B cell (primary cell): ENCODE measurements at regions of chr11 and their contacts with region 1.

Region 1: GRCh38 chr11:46489661-46490560 is 98.3 kb upstream of the CHRM4 start:
- DNase-seq: peak; percentile 43
- ATAC-seq: peak; percentile 63
- H3K4me3 ChIP-seq: no peak overlapping the region
- H3K4me3 Mint-ChIP-seq: no peak overlapping the region
- H3K27ac ChIP-seq: no peak overlapping the region
- H3K27ac Mint-ChIP-seq: peak overlapping the region; percentile 5
- H3K4me1 ChIP-seq: peaks cover 0 to 3% of the 10 kb centered on the region in 2 donors
- H3K4me1 Mint-ChIP-seq: peaks cover 19% of the 10 kb centered on the region
- H3K27me3 ChIP-seq: no peaks in the 10 kb centered on the region
- H3K27me3 Mint-ChIP-seq: no peaks in the 10 kb centered on the region
- CTCF ChIP-seq: peak; percentile 54

Region 2: DNA sequence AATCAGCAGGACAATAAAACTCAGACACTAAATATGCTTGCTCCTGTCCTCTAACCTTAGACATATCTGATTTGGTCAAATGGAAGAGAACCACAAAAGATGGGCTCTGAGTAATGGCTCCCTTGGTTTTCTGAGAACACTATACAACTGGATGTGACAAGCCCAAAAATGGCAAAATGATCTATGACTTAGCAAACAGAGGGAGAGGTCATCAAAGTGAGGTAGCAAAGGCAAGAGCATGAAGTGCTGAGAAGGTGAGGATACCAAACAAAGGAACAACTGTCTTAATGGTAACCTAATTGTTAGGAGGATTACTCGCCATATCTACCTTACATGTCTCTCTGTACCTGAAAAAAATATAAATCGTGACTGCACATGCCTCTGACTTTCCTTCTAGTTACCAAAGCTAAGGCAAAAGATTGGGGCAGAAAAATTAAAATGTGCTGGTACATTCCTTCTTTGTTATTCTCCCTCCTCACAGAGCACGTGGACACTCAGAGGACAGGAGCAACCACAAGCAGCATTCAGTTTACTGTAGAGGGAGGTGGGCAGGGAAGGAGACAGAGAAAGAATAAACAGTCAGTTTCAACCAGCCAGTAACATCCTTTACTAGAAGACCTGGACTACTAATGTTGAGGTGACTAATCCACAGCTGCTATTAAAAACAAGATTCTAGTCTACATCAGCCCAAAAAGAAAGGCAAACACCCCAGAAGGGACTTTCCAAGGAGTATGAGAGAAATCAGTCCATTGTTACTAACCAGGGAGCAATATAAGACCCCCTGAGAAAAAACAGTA is 15.1 kb after region 1 on chr11:
- CTCF ChIA-PET with region 1: interaction called, 36 read pairs
- POLR2A ChIA-PET with region 1: no interaction called
- intact Hi-C with region 1: no loop called
- DNase-seq: no peak
- ATAC-seq: no peak
- H3K4me3 ChIP-seq: no peak overlapping the region
- H3K4me3 Mint-ChIP-seq: no peak overlapping the region
- H3K27ac ChIP-seq: no peak overlapping the region
- H3K27ac Mint-ChIP-seq: no peak overlapping the region
- H3K4me1 ChIP-seq: no peaks in the 10 kb centered on the region
- H3K4me1 Mint-ChIP-seq: peaks cover 4% of the 10 kb centered on the region
- H3K27me3 ChIP-seq: no peaks in the 10 kb centered on the region
- H3K27me3 Mint-ChIP-seq: no peaks in the 10 kb centered on the region
- CTCF ChIP-seq: no peak

Region 3: DNA sequence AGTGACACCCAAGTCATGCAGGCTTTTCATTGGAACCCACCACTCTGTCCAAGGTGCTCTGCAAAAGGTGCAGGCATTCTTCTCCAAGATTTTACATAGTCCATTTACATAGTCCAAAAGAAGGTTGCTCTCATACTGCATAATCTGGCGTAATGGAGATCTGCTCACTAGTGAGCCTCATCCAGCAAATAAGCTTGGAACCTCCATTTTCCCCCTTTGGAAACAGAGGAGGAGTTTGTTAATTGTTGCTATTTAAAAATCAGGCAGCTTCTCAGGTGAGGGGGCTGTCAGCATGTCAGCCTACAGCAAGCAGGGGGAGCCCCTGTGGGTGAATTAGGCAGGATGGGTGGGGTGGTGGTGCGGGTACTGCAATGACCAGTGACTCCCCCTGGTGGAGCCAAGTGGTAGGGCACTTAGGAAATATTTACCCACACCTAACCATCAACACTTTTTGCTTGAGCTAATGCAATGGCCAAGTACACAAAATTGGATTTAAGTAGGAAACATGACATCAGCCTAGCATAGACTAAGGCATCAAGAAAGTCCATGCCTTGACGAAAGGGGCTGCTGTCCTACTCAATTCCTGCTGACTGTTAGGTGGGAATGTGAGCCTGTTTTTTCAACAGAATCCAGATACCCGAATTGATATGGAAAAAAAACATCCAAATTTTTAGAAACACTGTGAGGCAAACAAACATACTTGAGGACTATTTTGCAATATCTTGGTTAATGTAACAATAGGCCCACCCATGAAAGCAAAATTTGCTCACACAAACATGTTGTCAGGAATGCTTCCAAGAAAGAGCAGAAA is 39.4 kb after region 1 on chr11:
- CTCF ChIA-PET with region 1: interaction called, 19 read pairs
- POLR2A ChIA-PET with region 1: interaction called, 4 read pairs
- intact Hi-C with region 1: no loop called
- DNase-seq: peak; percentile 79
- ATAC-seq: peak; percentile 100
- H3K4me3 ChIP-seq: no peak overlapping the region
- H3K4me3 Mint-ChIP-seq: no peak overlapping the region
- H3K27ac ChIP-seq: no peak overlapping the region
- H3K27ac Mint-ChIP-seq: peak overlapping the region; percentile 46
- H3K4me1 ChIP-seq: peaks cover 4 to 5% of the 10 kb centered on the region in 2 donors
- H3K4me1 Mint-ChIP-seq: peaks cover 21% of the 10 kb centered on the region
- H3K27me3 ChIP-seq: no peaks in the 10 kb centered on the region
- H3K27me3 Mint-ChIP-seq: no peaks in the 10 kb centered on the region
- CTCF ChIP-seq: peak; percentile 96

Region 4: GRCh38 chr11:46616998-46617675 is 127.2 kb after region 1 on chr11 and contains the starts of genes ATG13 and HARBI1:
- CTCF ChIA-PET with region 1: interaction called, 20 read pairs
- POLR2A ChIA-PET with region 1: no interaction called
- intact Hi-C with region 1: loop called (anchors 1 kb)
- DNase-seq: peak; percentile 96
- ATAC-seq: peak; percentile 94
- H3K4me3 ChIP-seq: peak within 1 kb of the TSS; percentile 84 to 100 (median 100)
- H3K4me3 Mint-ChIP-seq: peak within 1 kb of the TSS; percentile 99
- H3K27ac ChIP-seq: peak within 1 kb of the TSS; percentile 99 to 100
- H3K27ac Mint-ChIP-seq: peak within 1 kb of the TSS; percentile 100
- H3K4me1 ChIP-seq: peaks cover 17 to 22% of the 10 kb centered on the region in 2 donors
- H3K4me1 Mint-ChIP-seq: peaks cover 30% of the 10 kb centered on the region
- H3K27me3 ChIP-seq: no peaks in the 10 kb centered on the region
- H3K27me3 Mint-ChIP-seq: no peaks in the 10 kb centered on the region
- CTCF ChIP-seq: no peak
- total RNA-seq, gene ATG13: 88.8 and 92.8 TPM in 2 replicates
- total RNA-seq, gene HARBI1: 6.7 and 8.0 TPM in 2 replicates